ENCODE measurements at regions of chr2 and their contacts with region 1.

Region 1: GRCh38 chr2:163735685-163736432 is at the start of gene FIGN:
- DNase-seq: peak; percentile 65
- H3K4me3 Mint-ChIP-seq: peak within 1 kb of the TSS; percentile 87
- H3K27ac Mint-ChIP-seq: peak within 1 kb of the TSS; percentile 94
- H3K4me1 Mint-ChIP-seq: peaks cover 16% of the 10 kb centered on the region
- H3K27me3 Mint-ChIP-seq: no peaks in the 10 kb centered on the region
- CTCF ChIP-seq: no peak
- total RNA-seq, gene FIGN: 8.4 and 9.1 TPM in 2 replicates

Region 2: GRCh38 chr2:163471947-163472346 is 263.9 kb before region 1 on chr2:
- CTCF ChIA-PET with region 1: no interaction called
- intact Hi-C with region 1: loop called (anchors 5 kb)
- DNase-seq: peak; percentile 20
- H3K4me3 Mint-ChIP-seq: no peak overlapping the region
- H3K27ac Mint-ChIP-seq: no peak overlapping the region
- H3K4me1 Mint-ChIP-seq: peaks cover 8% of the 10 kb centered on the region
- H3K27me3 Mint-ChIP-seq: no peaks in the 10 kb centered on the region
- CTCF ChIP-seq: peak; percentile 34

Region 3: GRCh38 chr2:163601377-163601776 is 134.5 kb before region 1 on chr2:
- CTCF ChIA-PET with region 1: no interaction called
- intact Hi-C with region 1: loop called (anchors 10 kb)
- DNase-seq: peak; percentile 60
- H3K4me3 Mint-ChIP-seq: no peak overlapping the region
- H3K27ac Mint-ChIP-seq: no peak overlapping the region
- H3K4me1 Mint-ChIP-seq: peaks cover 16% of the 10 kb centered on the region
- H3K27me3 Mint-ChIP-seq: no peaks in the 10 kb centered on the region
- CTCF ChIP-seq: no peak

Region 4: GRCh38 chr2:163778044-163778781 is 42.4 kb after region 1 on chr2:
- CTCF ChIA-PET with region 1: interaction called, 3 read pairs
- intact Hi-C with region 1: loop called (anchors 1 kb)
- DNase-seq: peak; percentile 72
- H3K4me3 Mint-ChIP-seq: peak overlapping the region; percentile 22
- H3K27ac Mint-ChIP-seq: peak overlapping the region; percentile 85
- H3K4me1 Mint-ChIP-seq: peaks cover 74% of the 10 kb centered on the region
- H3K27me3 Mint-ChIP-seq: no peaks in the 10 kb centered on the region
- CTCF ChIP-seq: no peak

Region 5: DNA sequence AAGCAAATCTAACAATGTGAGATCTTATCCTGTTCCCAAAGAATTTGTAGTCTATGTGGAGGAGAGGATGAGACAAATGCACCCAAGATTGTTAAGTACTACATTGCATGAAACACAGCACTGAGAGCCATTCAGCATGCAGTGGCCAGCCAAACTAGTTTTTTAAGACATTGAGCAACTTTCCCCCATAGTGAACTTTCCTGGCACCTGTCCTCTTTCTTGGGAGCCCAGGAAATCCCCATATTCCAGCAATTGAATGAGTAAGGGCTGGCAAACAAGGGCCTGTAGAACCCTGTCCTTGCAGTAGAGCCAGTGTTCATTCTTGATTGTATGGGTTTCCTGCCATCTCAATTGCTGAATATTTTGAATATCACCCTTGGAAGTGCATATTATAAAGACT is 58.8 kb after region 1 on chr2:
- CTCF ChIA-PET with region 1: no interaction called
- intact Hi-C with region 1: loop called (anchors 5 kb)
- DNase-seq: peak; percentile 69
- H3K4me3 Mint-ChIP-seq: no peak overlapping the region
- H3K27ac Mint-ChIP-seq: peak overlapping the region; percentile 78
- H3K4me1 Mint-ChIP-seq: peaks cover 50% of the 10 kb centered on the region
- H3K27me3 Mint-ChIP-seq: no peaks in the 10 kb centered on the region
- CTCF ChIP-seq: no peak

Region 6: DNA sequence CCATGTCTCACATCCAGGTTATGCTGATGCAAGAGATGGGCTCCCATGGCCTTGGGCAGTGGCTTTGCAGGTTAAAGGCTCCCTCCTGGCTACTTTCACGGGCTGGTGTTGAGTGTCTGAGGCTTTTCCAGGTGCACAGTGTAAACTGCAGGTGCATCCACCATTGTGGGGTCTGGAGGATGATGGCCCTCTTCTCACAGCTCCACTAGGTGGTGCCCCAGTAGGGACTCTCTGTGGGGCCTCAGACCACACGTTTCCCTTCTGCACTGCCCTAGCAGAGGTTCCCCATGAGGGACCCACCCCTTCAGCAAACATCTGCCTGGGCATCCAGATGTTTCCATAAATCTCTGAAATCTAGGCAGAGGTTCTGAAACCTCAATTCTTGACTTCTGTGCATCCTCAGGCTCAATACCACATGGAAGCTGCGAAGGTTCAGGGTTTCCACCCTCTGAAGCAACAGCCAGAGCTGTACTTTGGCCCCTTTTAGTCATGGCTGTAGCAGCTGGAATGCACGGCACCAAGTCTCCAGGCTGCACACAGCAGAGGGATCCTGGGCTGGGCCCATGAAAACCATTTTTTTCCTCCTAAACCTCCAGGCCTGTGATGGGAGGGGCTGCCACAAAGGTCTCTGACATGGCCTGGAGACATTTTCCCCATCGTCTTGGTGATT is 92.8 kb after region 1 on chr2:
- CTCF ChIA-PET with region 1: no interaction called
- intact Hi-C with region 1: no loop called
- DNase-seq: no peak
- H3K4me3 Mint-ChIP-seq: no peak overlapping the region
- H3K27ac Mint-ChIP-seq: no peak overlapping the region
- H3K4me1 Mint-ChIP-seq: peaks cover 8% of the 10 kb centered on the region
- H3K27me3 Mint-ChIP-seq: no peaks in the 10 kb centered on the region
- CTCF ChIP-seq: no peak

Region 7: DNA sequence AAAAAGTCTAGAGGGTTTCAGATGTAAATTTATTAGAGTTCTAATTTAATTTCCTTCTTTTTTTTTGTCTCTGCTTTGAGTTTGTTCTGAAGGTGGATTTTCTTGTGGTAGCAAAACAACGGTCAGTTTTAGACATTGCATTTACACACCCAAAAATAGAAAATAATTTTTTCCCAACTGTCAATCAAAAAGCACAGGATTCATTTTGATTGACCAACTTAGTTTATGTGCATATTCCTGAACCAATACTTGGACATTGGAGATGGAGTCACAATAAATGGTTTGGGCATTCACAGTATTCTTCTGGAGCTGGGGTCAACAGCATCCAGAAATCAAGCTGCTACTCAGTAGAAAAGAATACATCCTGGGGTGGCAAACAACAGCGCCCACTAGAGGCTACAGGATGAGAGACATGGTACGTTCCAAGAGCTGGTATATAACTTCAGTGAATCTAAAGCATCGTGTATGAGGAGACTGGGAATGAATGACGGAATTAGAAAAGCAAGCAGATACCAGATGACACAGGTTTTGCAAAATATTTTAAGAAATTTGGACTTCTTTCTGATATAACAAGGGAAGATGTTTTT is 142.8 kb after region 1 on chr2:
- CTCF ChIA-PET with region 1: interaction called, 4 read pairs
- intact Hi-C with region 1: loop called (anchors 5 kb)
- DNase-seq: peak; percentile 28
- H3K4me3 Mint-ChIP-seq: no peak overlapping the region
- H3K27ac Mint-ChIP-seq: no peak overlapping the region
- H3K4me1 Mint-ChIP-seq: no peaks in the 10 kb centered on the region
- H3K27me3 Mint-ChIP-seq: no peaks in the 10 kb centered on the region
- CTCF ChIP-seq: peak; percentile 51

Region 8: DNA sequence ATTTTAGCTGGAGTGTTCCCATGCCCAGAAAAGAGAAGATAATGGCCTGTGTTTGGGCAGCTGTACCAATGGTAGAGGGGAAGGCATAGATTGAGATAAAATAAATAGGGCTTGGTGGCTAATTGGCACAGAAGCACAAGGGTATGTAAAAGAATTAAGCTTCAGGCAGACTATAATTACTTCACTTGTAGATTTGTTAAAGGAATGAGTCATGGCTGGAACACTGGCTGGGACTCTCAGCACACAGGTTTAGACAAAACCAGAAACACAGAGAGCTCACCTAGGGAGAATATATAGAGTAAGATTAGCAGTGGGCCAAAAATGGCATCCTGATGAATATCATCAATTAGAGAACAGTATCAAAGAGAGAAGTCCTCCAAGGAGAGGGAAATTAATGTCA is 198.3 kb after region 1 on chr2:
- CTCF ChIA-PET with region 1: no interaction called
- intact Hi-C with region 1: no loop called
- DNase-seq: no peak
- H3K4me3 Mint-ChIP-seq: no peak overlapping the region
- H3K27ac Mint-ChIP-seq: no peak overlapping the region
- H3K4me1 Mint-ChIP-seq: no peaks in the 10 kb centered on the region
- H3K27me3 Mint-ChIP-seq: no peaks in the 10 kb centered on the region
- CTCF ChIP-seq: no peak